Activated B cell treated with CpG ODN at 0.5 μM for 24 hours (primary cell): ENCODE measurements at regions of chr4 and their contacts with region 1.

Region 1: DNA sequence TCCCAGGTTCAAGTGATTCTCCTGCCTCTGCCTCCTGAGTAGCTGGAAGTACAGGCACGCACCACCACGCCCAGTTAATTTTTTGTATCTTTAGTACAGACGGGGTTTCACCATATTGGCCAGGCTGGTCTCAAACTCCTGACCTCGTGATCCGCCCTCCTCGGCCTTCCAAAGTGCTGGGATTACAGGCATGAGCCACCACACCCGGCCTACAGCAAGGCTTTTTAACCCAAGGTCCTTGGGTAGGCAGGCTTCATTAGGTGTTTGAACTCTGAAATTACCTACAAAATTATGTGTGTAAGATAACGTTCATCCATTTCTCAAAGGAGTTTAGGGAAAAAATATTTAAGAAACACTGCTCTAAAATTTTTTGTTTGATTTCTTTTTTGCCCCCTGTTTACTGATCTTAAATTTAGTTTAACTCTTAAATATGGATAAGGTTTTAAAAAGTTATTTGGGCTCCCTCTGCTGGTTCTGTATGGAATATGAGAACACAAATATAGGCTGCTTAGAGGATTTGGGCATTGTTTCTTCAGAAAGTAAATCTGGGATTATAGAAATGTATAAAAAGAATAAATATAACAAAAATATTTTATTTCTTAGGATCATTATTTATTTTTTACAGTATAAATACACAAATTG is 92.8 kb downstream of the CBR4 start:
- DNase-seq: no peak
- ATAC-seq: no peak
- H3K4me3 Mint-ChIP-seq: no peak overlapping the region
- H3K27ac Mint-ChIP-seq: no peak overlapping the region
- H3K4me1 Mint-ChIP-seq: no peaks in the 10 kb centered on the region
- H3K27me3 Mint-ChIP-seq: no peaks in the 10 kb centered on the region
- CTCF ChIP-seq: no peak

Region 2: GRCh38 chr4:168514249-168514852 is 402.9 kb before region 1 on chr4:
- CTCF ChIA-PET with region 1: interaction called, 13 read pairs
- POLR2A ChIA-PET with region 1: no interaction called
- intact Hi-C with region 1: loop called (anchors 1 kb)
- DNase-seq: no peak
- ATAC-seq: no peak
- H3K4me3 Mint-ChIP-seq: no peak overlapping the region
- H3K27ac Mint-ChIP-seq: no peak overlapping the region
- H3K4me1 Mint-ChIP-seq: no peaks in the 10 kb centered on the region
- H3K27me3 Mint-ChIP-seq: peaks cover 2% of the 10 kb centered on the region
- CTCF ChIP-seq: no peak

Region 3: GRCh38 chr4:168585168-168586091 is 331.8 kb before region 1 on chr4:
- CTCF ChIA-PET with region 1: interaction called, 3 read pairs
- POLR2A ChIA-PET with region 1: no interaction called
- intact Hi-C with region 1: loop called (anchors 1 kb)
- DNase-seq: no peak
- ATAC-seq: no peak
- H3K4me3 Mint-ChIP-seq: no peak overlapping the region
- H3K27ac Mint-ChIP-seq: no peak overlapping the region
- H3K4me1 Mint-ChIP-seq: no peaks in the 10 kb centered on the region
- H3K27me3 Mint-ChIP-seq: peaks cover 14% of the 10 kb centered on the region
- CTCF ChIP-seq: no peak

Region 4: GRCh38 chr4:168877511-168878491 is 39.5 kb before region 1 on chr4:
- CTCF ChIA-PET with region 1: no interaction called
- POLR2A ChIA-PET with region 1: no interaction called
- intact Hi-C with region 1: no loop called
- DNase-seq: peak; percentile 25
- ATAC-seq: peak; percentile 55
- H3K4me3 Mint-ChIP-seq: peak overlapping the region; percentile 80
- H3K27ac Mint-ChIP-seq: peak overlapping the region; percentile 8
- H3K4me1 Mint-ChIP-seq: peaks cover 28% of the 10 kb centered on the region
- H3K27me3 Mint-ChIP-seq: peaks cover 35% of the 10 kb centered on the region
- CTCF ChIP-seq: no peak